HCT116 (cell line): ENCODE measurements at regions of chrX and their contacts with region 1.

Region 1: GRCh38 chrX:49884290-49884862 is 5.1 kb downstream of the USP27X start:
- DNase-seq: peak; percentile 26
- ATAC-seq: peak; percentile 58
- H3K4me3 ChIP-seq: no peak overlapping the region
- H3K27ac ChIP-seq: no peak overlapping the region
- H3K4me1 ChIP-seq: peaks cover 4 to 11% of the 10 kb centered on the region in 2 experiments; a peak in 2 of 4 replicates
- H3K27me3 ChIP-seq: no peaks in the 10 kb centered on the region
- CTCF ChIP-seq: peak; percentile 43 to 82 (median 72); a peak in 5 of 6 replicates
- POLR2A ChIP-seq: no peak
- RAD21 ChIP-seq: peak; percentile 50

Region 2: GRCh38 chrX:49746306-49746705 is 138.1 kb before region 1 on chrX:
- CTCF ChIA-PET with region 1: no interaction called
- POLR2A ChIA-PET with region 1: no interaction called
- RAD21 ChIA-PET with region 1: no interaction called
- intact Hi-C with region 1: no loop called
- DNase-seq: no peak
- ATAC-seq: no peak
- H3K4me3 ChIP-seq: no peak overlapping the region
- H3K27ac ChIP-seq: no peak overlapping the region
- H3K4me1 ChIP-seq: no peaks in the 10 kb centered on the region
- H3K27me3 ChIP-seq: peaks cover 48% of the 10 kb centered on the region
- CTCF ChIP-seq: no peak
- POLR2A ChIP-seq: no peak
- RAD21 ChIP-seq: no peak

Region 3: DNA sequence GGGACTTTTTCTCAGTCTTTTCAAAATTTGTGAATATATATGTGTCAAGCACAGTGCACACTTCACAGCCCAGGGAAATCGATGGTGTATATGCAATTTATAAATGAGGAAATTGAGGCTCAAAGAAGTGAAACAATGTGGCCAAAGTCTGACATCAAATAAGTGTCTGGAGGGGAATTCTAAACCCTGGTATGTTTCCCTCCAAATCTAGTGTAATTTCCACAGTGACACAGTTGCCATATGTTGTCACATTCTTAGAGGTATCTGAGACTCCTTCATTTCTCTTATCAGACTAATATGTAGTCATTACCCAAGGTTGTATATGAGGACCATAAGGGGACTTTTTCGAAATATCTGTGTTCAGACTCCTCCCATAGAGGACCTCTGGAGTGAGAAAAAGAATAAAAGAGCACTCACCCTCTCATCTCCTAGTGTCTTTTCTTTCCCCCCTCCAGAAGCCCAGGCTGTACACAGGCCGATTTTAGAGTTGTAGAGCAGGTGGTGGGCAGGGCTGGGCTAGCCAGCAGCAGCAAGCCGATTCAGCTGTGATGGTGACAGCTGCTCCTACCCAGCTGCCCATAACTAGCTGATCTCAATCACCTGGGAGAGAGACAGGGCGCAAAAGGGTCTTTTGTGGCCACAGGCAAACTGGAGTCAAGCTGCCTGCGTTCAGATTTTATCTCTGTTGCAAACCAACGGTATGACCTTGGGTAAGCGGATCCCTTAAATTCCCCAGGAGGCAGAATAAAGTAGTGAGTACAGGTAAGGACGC is 93.1 kb after region 1 on chrX:
- CTCF ChIA-PET with region 1: no interaction called
- POLR2A ChIA-PET with region 1: no interaction called
- RAD21 ChIA-PET with region 1: no interaction called
- intact Hi-C with region 1: no loop called
- DNase-seq: no peak
- ATAC-seq: no peak
- H3K4me3 ChIP-seq: no peak overlapping the region
- H3K27ac ChIP-seq: no peak overlapping the region
- H3K4me1 ChIP-seq: no peaks in the 10 kb centered on the region
- H3K27me3 ChIP-seq: no peaks in the 10 kb centered on the region
- CTCF ChIP-seq: no peak
- POLR2A ChIP-seq: no peak
- RAD21 ChIP-seq: no peak

Region 4: DNA sequence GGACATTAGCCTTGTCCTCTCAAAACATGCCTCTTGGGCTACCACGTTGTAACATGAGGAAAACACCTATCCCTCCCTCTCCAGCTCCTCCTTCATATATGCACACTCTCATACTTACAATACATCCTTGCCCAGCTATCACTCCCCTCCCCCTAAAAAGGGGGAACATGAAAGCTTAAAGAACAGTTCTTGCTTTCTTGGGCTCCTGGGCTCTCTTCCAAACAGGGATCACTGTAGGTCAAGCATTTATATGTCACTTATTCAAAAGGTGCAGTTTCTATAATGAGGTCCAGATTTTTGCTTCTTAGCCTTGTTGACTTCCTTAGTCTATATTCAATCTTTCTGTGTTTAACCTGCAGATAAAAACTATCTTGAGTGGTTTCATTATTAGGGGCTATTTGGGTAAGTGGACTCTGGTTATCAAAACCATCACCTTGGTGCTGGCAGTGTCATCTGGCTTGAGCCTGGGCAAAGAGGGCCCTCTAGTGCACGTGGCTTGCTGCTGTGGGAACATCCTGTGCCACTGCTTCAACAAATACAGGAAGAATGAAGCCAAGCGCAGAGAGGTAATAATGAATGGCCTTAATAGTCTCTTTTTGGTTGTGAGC is 197.0 kb after region 1 on chrX:
- CTCF ChIA-PET with region 1: interaction called, 4 read pairs
- POLR2A ChIA-PET with region 1: no interaction called
- RAD21 ChIA-PET with region 1: no interaction called
- intact Hi-C with region 1: loop called (anchors 1 kb)
- DNase-seq: no peak
- ATAC-seq: peak; percentile 55; the same call in 1 of the 2 replicates
- H3K4me3 ChIP-seq: no peak overlapping the region
- H3K27ac ChIP-seq: no peak overlapping the region
- H3K4me1 ChIP-seq: no peaks in the 10 kb centered on the region
- H3K27me3 ChIP-seq: no peaks in the 10 kb centered on the region
- CTCF ChIP-seq: peak; percentile 43 to 46 (median 46); a peak in 4 of 6 replicates
- POLR2A ChIP-seq: no peak
- RAD21 ChIP-seq: peak; percentile 67